Heart left ventricle (tissue), 16 donors: ENCODE measurements at regions of chr21 and their contacts with region 1.

Region 1: DNA sequence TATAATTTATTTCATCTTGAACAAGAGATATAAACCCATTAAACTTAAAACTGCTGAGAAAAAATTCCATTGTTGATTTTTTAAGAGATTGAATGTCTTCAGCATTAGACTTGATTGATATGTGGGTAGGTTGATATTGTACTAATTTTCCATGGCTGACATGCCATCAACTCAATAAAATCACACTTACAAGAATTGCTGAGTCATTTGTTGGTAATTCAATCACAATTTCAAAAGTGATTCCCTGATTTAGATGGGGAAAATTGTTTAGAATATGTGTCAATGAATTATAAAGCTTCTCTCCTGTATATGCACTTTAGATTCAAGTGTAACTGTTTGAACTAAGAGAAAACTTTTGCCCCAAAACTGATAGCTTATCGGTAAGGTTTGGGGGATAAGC is 223.5 kb upstream of the NCAM2 start:
- DNase-seq: no peak
- ATAC-seq: no peak
- H3K4me3 ChIP-seq: no peak overlapping the region
- H3K27ac ChIP-seq: no peak overlapping the region
- H3K4me1 ChIP-seq: no peaks in the 10 kb centered on the region
- H3K27me3 ChIP-seq: no peaks in the 10 kb centered on the region
- CTCF ChIP-seq: no peak
- POLR2A ChIP-seq: no peak

Region 2: DNA sequence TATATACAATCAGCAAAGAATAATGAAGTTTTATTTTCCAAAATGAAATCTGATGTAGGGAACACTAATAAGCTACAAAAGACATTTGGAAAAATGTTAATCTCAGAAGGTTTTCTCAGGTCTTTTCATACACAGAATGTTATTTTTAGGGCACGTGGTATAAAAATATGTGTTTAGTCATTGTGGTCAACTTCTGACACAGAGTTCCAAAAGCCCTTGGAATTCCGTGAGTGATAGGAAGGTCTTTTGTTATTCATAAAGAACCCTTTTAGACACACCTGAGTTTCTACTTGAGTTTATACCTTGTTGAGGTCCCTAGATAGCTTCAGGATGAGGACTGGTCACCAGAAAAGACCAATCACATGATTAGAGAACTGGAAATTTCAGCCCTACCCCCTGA is 54.1 kb before region 1 on chr21:
- intact Hi-C with region 1: loop called in 1 of 10 experiments (anchors 10 kb)
- DNase-seq: no peak
- ATAC-seq: no peak
- H3K4me3 ChIP-seq: no peak overlapping the region
- H3K27ac ChIP-seq: no peak overlapping the region
- H3K4me1 ChIP-seq: no peaks in the 10 kb centered on the region
- H3K27me3 ChIP-seq: no peaks in the 10 kb centered on the region
- CTCF ChIP-seq: no peak
- POLR2A ChIP-seq: no peak

Region 3: GRCh38 chr21:20735257-20735656 is 39.5 kb before region 1 on chr21:
- intact Hi-C with region 1: no loop called
- DNase-seq: no peak
- ATAC-seq: no peak
- H3K4me3 ChIP-seq: no peak overlapping the region
- H3K27ac ChIP-seq: no peak overlapping the region
- H3K4me1 ChIP-seq: no peaks in the 10 kb centered on the region
- H3K27me3 ChIP-seq: no peaks in the 10 kb centered on the region
- CTCF ChIP-seq: no peak
- POLR2A ChIP-seq: no peak

Region 4: GRCh38 chr21:20882462-20883407 is 108.0 kb after region 1 on chr21:
- intact Hi-C with region 1: no loop called
- DNase-seq: no peak
- ATAC-seq: no peak
- H3K4me3 ChIP-seq: no peak overlapping the region
- H3K27ac ChIP-seq: no peak overlapping the region
- H3K4me1 ChIP-seq: no peaks in the 10 kb centered on the region
- H3K27me3 ChIP-seq: no peaks in the 10 kb centered on the region
- CTCF ChIP-seq: peak in 11 of 12 donors; percentile 20 to 51 (median 30)
- POLR2A ChIP-seq: no peak

Region 5: GRCh38 chr21:20902511-20902910 is 127.8 kb after region 1 on chr21:
- intact Hi-C with region 1: no loop called
- DNase-seq: no peak
- ATAC-seq: peak in 1 of 4 donors; percentile 41
- H3K4me3 ChIP-seq: peak overlapping the region in 1 of 12 donors; percentile 11
- H3K27ac ChIP-seq: peak overlapping the region in 2 of 12 donors; percentile 18 to 22
- H3K4me1 ChIP-seq: no peaks in the 10 kb centered on the region
- H3K27me3 ChIP-seq: no peaks in the 10 kb centered on the region
- CTCF ChIP-seq: no peak
- POLR2A ChIP-seq: no peak